ENCODE measurements at regions of chr5 and their contacts with region 1.

Region 1: GRCh38 chr5:154520861-154521453 is 42.9 kb upstream of the HAND1 start:
- DNase-seq: no peak
- H3K4me3 Mint-ChIP-seq: no peak overlapping the region
- H3K27ac Mint-ChIP-seq: no peak overlapping the region
- H3K4me1 Mint-ChIP-seq: no peaks in the 10 kb centered on the region
- H3K27me3 Mint-ChIP-seq: peaks cover 53% of the 10 kb centered on the region

Region 2: DNA sequence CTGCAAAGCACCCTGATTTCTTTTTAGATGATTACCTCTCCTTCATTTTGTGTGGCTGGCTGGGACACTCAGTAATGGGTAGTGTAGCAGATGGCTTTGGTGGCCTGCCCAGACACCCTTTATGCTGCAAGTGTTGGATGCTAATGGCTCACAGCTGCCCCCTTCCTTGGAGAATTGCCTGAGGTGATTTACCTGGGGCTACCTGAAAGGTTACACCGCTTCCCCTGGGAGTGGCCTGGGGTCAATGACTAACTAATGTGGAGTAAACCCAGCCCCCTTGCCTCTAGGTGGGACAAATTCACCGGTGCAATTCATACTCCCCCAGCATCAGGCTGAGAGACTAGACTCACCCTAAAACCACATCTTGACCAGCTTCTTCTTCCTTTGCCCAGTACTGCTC is 19.4 kb before region 1 on chr5:
- CTCF ChIA-PET with region 1: interaction called, 14 read pairs
- DNase-seq: no peak
- H3K4me3 Mint-ChIP-seq: no peak overlapping the region
- H3K27ac Mint-ChIP-seq: no peak overlapping the region
- H3K4me1 Mint-ChIP-seq: peaks cover 3% of the 10 kb centered on the region
- H3K27me3 Mint-ChIP-seq: peaks cover 60% of the 10 kb centered on the region

Region 3: GRCh38 chr5:154534457-154535050 is 13.6 kb after region 1 on chr5:
- CTCF ChIA-PET with region 1: interaction called, 10 read pairs
- DNase-seq: no peak
- H3K4me3 Mint-ChIP-seq: no peak overlapping the region
- H3K27ac Mint-ChIP-seq: no peak overlapping the region
- H3K4me1 Mint-ChIP-seq: no peaks in the 10 kb centered on the region
- H3K27me3 Mint-ChIP-seq: peaks cover 4% of the 10 kb centered on the region

Region 4: DNA sequence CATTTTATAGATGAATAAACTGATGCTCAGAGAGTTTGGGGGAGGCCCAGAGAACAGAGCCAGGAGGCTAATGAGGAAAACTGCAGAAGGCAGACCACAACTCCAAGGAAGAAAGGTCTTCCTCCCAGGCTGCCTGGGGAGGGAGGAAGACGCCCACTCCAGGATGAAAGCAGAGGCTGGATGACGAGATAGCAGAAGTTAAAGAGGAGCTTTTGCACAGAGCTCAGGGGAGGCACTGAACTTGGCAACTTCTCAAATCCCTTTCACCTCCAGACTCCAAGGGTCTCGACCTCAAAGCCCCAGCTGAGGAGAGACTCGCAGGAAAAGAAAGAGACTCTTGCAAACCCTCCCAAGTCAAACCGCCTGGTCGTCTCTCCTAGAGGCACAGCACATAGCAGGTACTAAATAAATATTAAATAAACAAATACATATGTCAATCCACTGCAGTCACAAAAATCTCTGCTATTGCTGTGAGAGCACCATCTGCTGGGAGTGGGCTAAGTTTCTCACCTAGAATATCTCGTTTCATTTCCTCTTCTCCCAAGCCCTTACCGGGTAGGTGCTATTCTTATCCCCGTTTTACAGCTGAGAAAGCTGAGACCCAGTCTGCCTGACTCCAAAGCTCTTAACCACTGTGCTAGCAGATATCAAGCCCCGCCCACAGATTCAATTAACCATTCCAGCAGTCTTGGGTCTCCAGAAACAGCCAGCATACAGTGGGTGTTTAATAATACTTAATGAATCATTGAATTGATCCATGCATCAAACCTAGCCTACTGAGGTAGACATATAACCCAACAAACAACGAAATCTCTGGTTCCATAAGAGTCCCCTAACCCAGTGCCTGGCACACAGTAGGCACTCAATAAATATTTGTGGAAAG is 54.8 kb after region 1 on chr5:
- CTCF ChIA-PET with region 1: no interaction called
- DNase-seq: no peak
- H3K4me3 Mint-ChIP-seq: no peak overlapping the region
- H3K27ac Mint-ChIP-seq: no peak overlapping the region
- H3K4me1 Mint-ChIP-seq: no peaks in the 10 kb centered on the region
- H3K27me3 Mint-ChIP-seq: peaks cover 36% of the 10 kb centered on the region

Region 5: DNA sequence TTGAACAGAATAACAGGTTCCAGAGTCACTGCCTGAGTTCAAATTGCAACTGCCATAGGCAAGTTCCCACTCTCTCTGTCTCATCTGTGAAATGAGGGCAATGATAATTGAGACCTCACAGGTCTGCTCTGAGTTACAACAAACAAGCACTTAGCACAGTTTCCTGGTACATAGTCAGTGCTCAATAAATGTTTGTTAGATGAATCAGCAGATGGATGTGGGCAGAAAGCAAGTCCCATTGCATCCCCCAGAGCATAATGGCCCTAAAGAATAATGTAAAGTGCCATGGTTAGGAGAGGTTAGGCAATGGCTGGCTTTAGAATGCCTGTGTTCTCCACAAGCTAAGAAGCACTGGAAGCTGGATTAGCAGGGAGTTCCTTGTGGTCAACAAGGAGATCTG is 97.7 kb after region 1 on chr5:
- CTCF ChIA-PET with region 1: no interaction called
- DNase-seq: no peak
- H3K4me3 Mint-ChIP-seq: no peak overlapping the region
- H3K27ac Mint-ChIP-seq: no peak overlapping the region
- H3K4me1 Mint-ChIP-seq: no peaks in the 10 kb centered on the region
- H3K27me3 Mint-ChIP-seq: peaks cover 16% of the 10 kb centered on the region